CD14-positive monocyte (primary cell): ENCODE measurements at regions of chr4 and their contacts with region 1.

Region 1: DNA sequence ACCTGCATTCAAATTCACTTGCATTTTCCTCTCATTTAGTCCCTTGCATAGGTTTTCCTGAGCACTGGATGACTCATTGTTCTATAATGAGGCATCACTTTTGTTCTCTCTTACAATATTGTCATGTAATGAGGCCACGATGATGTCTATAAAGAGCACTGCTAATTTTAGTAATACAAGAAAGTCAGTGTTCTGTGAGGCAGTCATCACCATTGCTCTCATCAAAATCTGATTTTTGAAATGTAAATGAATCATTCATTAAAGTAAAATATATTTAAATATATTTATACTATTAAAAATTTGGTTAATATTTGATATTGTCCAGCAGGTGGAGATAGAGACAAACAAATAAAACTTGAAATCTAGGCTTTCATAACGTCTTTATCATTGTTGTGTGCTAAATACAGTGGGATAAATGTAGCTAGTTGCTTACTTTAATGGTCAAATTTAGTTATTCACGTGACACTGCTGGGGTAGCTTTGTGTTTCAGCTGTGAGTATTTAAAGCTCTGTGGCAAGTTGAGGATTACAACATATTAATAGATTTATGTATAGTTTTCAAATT is 15.4 kb downstream of the HMGB2 start:
- DNase-seq: peak; percentile 25 to 64 (median 62)
- H3K4me3 ChIP-seq: no peak overlapping the region
- H3K4me3 Mint-ChIP-seq: no peak overlapping the region
- H3K27ac ChIP-seq: peak overlapping the region in 1 of 2 donors; percentile 11
- H3K27ac Mint-ChIP-seq: peak overlapping the region in 3 of 7 donors; percentile 35 to 83 (median 69)
- H3K4me1 ChIP-seq: peaks cover 12 to 17% of the 10 kb centered on the region in 2 donors
- H3K4me1 Mint-ChIP-seq: peaks cover 15% of the 10 kb centered on the region
- H3K27me3 ChIP-seq: no peaks in the 10 kb centered on the region
- H3K27me3 Mint-ChIP-seq: no peaks in the 10 kb centered on the region
- CTCF ChIP-seq: peak; percentile 77

Region 2: GRCh38 chr4:173494013-173494970 is 175.6 kb after region 1 on chr4:
- intact Hi-C with region 1: loop called in 1 of 2 experiments (anchors 10 kb)
- DNase-seq: peak in 2 of 3 donors; percentile 54 to 64
- H3K4me3 ChIP-seq: peak overlapping the region; percentile 17 to 74 (median 32)
- H3K4me3 Mint-ChIP-seq: peak overlapping the region; percentile 77 to 92
- H3K27ac ChIP-seq: no peak overlapping the region
- H3K27ac Mint-ChIP-seq: peak overlapping the region in 2 of 7 donors; percentile 41 to 45
- H3K4me1 ChIP-seq: peaks cover 45 to 59% of the 10 kb centered on the region in 2 donors
- H3K4me1 Mint-ChIP-seq: peaks cover 54% of the 10 kb centered on the region
- H3K27me3 ChIP-seq: peaks cover 9 to 23% of the 10 kb centered on the region in 2 donors
- H3K27me3 Mint-ChIP-seq: peaks cover 14 to 26% (median 19%) of the 10 kb centered on the region in 3 donors
- CTCF ChIP-seq: peak; percentile 85